ENCODE measurements at regions of chr6 and their contacts with region 1.

Region 1: DNA sequence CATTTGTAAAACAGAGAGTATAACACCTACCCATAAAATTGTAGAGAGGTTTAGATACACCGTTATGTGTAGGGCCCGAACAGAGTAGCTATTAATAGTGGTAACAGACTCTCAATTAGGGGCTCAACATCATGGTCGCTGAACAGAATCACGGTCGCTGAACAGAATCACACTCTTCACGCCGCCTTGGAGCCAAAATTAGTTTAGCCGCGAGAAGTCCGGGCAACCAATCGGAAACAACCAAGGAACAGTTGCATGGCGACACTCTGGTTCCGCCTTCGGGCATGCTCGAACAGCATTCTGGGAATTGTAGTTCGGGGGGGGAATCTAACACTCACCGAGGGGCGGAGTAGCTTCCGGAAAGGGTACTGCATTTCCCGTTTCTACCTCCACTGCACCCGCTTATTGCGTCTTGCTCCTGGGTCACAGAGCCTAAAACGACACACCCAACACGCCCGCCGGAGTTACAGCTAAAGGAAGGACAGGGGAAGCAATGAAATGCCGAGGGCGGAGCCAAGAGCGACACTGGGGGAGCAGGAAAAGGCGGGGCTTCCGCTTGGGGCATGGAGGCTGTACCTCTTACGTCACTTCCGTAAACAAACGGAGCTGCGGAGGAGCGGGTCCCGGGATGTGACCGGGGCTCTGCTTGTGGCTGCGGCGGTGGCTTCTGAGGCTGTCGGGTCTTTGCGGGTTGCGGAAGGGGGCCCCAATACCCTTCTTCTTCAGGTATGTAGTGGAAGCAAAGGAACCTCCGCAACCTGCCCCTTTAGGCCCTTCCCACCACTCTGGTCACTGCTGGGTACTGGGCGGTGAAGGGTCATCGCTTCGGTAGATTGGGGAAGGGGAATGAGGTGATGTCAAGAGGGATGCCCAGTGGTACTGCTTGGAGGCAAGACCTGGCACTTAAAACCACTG is at the start of gene CCDC28A:
- DNase-seq: peak; percentile 86 to 98 (median 97)
- ATAC-seq: peak; percentile 93
- H3K4me3 ChIP-seq: peak within 1 kb of the TSS; percentile 94
- H3K4me3 Mint-ChIP-seq: peak within 1 kb of the TSS; percentile 91 to 100 (median 99)
- H3K27ac ChIP-seq: peak within 1 kb of the TSS; percentile 87
- H3K27ac Mint-ChIP-seq: peak within 1 kb of the TSS; percentile 96 to 100 (median 100)
- H3K4me1 ChIP-seq: peaks cover 6 to 10% of the 10 kb centered on the region in 2 donors
- H3K4me1 Mint-ChIP-seq: peaks cover 4 to 39% (median 36%) of the 10 kb centered on the region in 7 donors
- H3K27me3 ChIP-seq: no peaks in the 10 kb centered on the region
- H3K27me3 Mint-ChIP-seq: no peaks in the 10 kb centered on the region
- total RNA-seq, gene CCDC28A: 19.9 to 34.2 (median 25.6) TPM

Region 2: GRCh38 chr6:136822376-136823127 is 1950.9 kb before region 1 on chr6 and contains the start of gene PEX7:
- CTCF ChIA-PET with region 1: no interaction called
- POLR2A ChIA-PET with region 1: no interaction called
- intact Hi-C with region 1: loop called in 1 of 2 experiments (anchors 2 kb)
- DNase-seq: peak; percentile 83 to 94 (median 92)
- ATAC-seq: peak; percentile 95
- H3K4me3 ChIP-seq: peak within 1 kb of the TSS; percentile 96
- H3K4me3 Mint-ChIP-seq: peak within 1 kb of the TSS; percentile 87 to 99 (median 94)
- H3K27ac ChIP-seq: peak within 1 kb of the TSS; percentile 91
- H3K27ac Mint-ChIP-seq: peak within 1 kb of the TSS; percentile 91 to 99 (median 96)
- H3K4me1 ChIP-seq: peaks cover 6 to 13% of the 10 kb centered on the region in 2 donors
- H3K4me1 Mint-ChIP-seq: peaks cover 13 to 50% (median 40%) of the 10 kb centered on the region in 7 donors
- H3K27me3 ChIP-seq: peaks cover 0 to 3% of the 10 kb centered on the region in 2 donors
- H3K27me3 Mint-ChIP-seq: peaks cover 3 to 10% (median 8%) of the 10 kb centered on the region in 5 donors
- total RNA-seq, gene PEX7: 4.0 to 6.2 (median 5.4) TPM

Region 3: DNA sequence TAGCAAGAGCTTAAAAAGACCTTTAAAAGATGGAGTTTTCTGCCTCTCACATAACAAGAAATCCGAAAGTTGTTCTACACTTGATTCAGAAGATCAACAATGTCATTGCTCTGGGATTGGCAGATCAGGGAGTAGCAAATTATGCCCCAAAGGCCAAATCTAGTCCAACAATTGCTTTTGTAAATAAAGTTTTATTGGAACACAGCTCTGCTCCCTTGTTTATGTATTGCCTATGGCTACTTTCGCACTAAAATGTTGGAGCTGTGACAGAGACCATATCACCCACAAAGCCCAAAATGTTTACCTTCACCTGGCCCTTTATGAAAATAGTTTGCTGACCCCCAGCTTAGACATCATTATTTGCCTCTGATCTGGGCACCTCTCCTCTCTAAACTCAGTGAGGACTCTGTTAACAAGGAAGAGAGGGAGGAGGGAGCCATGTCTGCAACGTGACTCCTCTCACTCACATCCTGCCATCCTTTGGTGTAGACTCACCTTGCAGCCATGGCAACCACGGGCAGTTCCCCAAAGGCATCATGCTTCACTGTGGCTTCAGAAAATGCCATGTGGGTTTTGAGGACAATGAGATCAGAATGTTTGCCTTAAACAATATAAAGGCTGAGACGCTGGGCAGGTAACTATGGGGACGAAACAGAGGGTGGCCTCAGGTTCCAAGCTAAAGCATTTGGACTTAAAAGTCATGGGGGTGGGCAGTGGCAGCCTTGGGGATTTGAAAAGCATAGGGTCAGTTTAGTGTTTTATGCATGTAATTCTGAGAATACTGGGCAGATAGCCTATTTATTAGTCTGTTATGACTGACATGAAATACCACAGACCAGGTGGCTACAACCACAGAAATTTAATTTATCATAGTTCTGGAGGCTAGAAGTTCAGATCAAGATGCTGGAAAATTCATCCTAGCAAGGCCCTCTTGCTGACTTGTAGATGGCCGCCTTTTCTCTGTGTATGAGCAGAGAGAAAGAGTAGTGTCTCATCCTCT is 1056.1 kb before region 1 on chr6:
- CTCF ChIA-PET with region 1: no interaction called
- POLR2A ChIA-PET with region 1: no interaction called
- intact Hi-C with region 1: loop called in 1 of 2 experiments (anchors 10 kb)
- DNase-seq: peak; percentile 44 to 85 (median 76)
- ATAC-seq: peak; percentile 74
- H3K4me3 ChIP-seq: no peak overlapping the region
- H3K4me3 Mint-ChIP-seq: peak overlapping the region in 8 of 10 donors; percentile 1 to 76 (median 23)
- H3K27ac ChIP-seq: peak overlapping the region; percentile 65
- H3K27ac Mint-ChIP-seq: peak overlapping the region; percentile 56 to 96 (median 93)
- H3K4me1 ChIP-seq: peaks cover 17 to 36% of the 10 kb centered on the region in 2 donors
- H3K4me1 Mint-ChIP-seq: peaks cover 23 to 65% (median 40%) of the 10 kb centered on the region in 7 donors
- H3K27me3 ChIP-seq: no peaks in the 10 kb centered on the region
- H3K27me3 Mint-ChIP-seq: no peaks in the 10 kb centered on the region

Region 4: GRCh38 chr6:138109042-138109997 is 664.1 kb before region 1 on chr6:
- CTCF ChIA-PET with region 1: no interaction called
- POLR2A ChIA-PET with region 1: no interaction called
- intact Hi-C with region 1: loop called (anchors 5 kb)
- DNase-seq: peak; percentile 47 to 77 (median 68)
- ATAC-seq: peak; percentile 84
- H3K4me3 ChIP-seq: no peak overlapping the region
- H3K4me3 Mint-ChIP-seq: peak overlapping the region in 4 of 10 donors; percentile 2 to 45 (median 7)
- H3K27ac ChIP-seq: no peak overlapping the region
- H3K27ac Mint-ChIP-seq: no peak overlapping the region
- H3K4me1 ChIP-seq: peaks cover 8 to 10% of the 10 kb centered on the region in 2 donors
- H3K4me1 Mint-ChIP-seq: peaks cover 14 to 27% (median 20%) of the 10 kb centered on the region in 7 donors
- H3K27me3 ChIP-seq: peaks cover 0 to 6% of the 10 kb centered on the region in 2 donors
- H3K27me3 Mint-ChIP-seq: peaks cover 34 to 56% (median 47%) of the 10 kb centered on the region in 5 donors

Region 5: DNA sequence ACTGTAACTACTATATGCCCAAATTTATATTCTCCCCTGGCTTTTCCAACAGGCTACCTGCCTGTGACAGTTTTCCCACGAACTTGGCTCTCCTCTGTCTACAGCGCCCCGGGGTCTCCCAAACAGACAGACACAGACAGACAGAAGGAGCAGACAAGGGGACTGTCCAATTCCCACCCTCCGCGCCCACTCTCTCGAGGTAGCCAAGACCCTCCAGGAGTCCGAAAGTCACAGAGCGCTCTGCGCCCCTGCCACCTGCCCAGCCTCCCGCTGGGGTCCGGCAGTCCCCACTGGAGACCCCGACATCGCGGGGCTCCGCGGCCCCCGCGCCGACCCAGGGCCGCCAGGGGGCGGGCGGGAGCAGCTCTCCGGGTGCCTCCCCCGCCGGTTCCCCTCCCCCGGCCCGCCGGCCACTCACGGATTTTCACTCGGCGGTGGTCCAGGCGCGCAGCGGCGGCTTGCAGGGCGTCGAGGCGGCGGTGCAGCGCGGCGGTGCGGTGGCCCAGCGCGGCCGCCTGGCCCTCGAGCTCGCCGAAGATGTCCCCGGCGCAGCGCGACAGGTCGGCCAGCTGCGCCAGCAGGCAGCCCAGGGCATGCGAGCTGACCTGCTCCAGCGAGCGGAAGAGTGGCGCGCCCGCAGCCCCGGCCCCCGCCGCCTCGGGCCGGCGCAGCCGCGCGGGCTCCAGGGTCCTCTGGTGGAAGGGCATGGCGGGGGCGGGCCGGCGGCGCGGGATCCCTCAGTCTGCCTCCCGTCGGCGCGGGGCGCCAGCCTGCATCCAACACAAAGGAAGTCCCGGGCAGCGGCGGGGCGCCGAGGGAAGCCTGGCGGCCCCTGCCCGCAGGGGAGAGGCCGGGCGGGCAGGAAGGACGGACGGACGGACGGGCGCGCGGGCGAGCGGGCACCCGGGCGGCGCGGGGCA is 81.1 kb before region 1 on chr6:
- CTCF ChIA-PET with region 1: interaction called, 3 read pairs
- POLR2A ChIA-PET with region 1: no interaction called
- intact Hi-C with region 1: loop called in 1 of 2 experiments (anchors 2 kb)
- DNase-seq: peak; percentile 20 to 74 (median 37)
- ATAC-seq: peak; percentile 80
- H3K4me3 ChIP-seq: peak overlapping the region; percentile 22
- H3K4me3 Mint-ChIP-seq: peak overlapping the region; percentile 53 to 88 (median 86)
- H3K27ac ChIP-seq: no peak overlapping the region
- H3K27ac Mint-ChIP-seq: peak overlapping the region in 2 of 9 donors; percentile 49 to 77
- H3K4me1 ChIP-seq: peaks cover 0 to 3% of the 10 kb centered on the region in 2 donors
- H3K4me1 Mint-ChIP-seq: peaks cover 0 to 13% (median 9%) of the 10 kb centered on the region in 7 donors
- H3K27me3 ChIP-seq: peaks cover 0 to 6% of the 10 kb centered on the region in 2 donors
- H3K27me3 Mint-ChIP-seq: peaks cover 23 to 56% (median 46%) of the 10 kb centered on the region in 5 donors

Region 6: DNA sequence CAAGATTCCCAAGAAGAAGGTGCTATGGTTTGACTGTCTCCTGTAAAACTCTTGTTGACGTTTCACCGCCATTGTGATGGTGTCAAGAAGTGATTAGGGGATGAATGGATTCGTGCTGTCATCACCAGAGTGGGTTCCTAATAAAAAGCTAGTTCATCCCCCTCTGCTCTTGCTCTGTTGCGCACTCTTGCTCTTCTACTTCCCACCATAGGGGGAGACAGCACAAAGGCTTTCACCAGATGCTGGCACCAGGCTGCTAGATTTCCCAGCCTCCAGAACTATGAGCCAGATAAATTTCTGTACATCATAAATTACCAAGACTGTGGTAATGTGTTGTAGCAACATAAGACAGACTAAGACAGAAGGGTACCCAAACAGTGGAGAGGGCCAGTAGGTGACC is 21.4 kb before region 1 on chr6:
- CTCF ChIA-PET with region 1: no interaction called
- POLR2A ChIA-PET with region 1: no interaction called
- intact Hi-C with region 1: no loop called
- DNase-seq: no peak
- ATAC-seq: no peak
- H3K4me3 ChIP-seq: no peak overlapping the region
- H3K4me3 Mint-ChIP-seq: no peak overlapping the region
- H3K27ac ChIP-seq: no peak overlapping the region
- H3K27ac Mint-ChIP-seq: no peak overlapping the region
- H3K4me1 ChIP-seq: no peaks in the 10 kb centered on the region
- H3K4me1 Mint-ChIP-seq: no peaks in the 10 kb centered on the region
- H3K27me3 ChIP-seq: no peaks in the 10 kb centered on the region
- H3K27me3 Mint-ChIP-seq: no peaks in the 10 kb centered on the region

Region 7: DNA sequence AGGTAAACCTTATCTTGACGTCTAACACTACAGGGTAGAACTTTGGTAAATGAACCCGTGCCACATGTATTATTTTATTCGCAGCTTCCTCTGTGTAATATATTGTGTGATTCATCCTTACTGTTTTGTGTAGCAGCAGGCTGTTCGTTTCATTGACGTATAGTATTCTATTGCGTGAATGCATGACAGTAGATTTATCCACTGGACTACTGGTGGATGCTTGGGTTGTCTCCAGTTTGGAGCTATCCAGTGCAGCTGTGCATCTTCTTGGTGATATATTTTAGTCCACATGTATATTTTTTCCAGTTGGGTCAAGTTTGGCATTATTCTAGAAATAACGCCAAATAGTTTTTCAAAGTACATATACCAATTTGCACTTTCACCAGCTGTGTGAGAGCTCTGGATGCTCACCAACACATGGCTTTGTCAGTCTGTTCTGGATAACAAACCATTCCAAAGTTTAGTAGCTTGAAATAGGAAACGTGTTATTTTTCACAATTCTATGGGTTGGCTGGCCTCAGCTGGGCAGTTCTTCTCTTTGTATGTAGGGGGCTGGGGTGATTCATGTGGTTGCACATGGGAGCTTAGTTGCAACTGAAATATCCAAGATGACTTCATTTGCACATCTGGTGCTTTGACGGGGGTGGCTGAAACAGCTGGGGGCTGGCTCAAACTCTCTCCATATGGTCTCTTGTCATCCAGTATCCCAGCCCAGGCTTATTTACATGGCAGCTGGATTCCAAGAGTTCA is 31.8 kb after region 1 on chr6:
- CTCF ChIA-PET with region 1: no interaction called
- POLR2A ChIA-PET with region 1: no interaction called
- intact Hi-C with region 1: no loop called
- DNase-seq: no peak
- ATAC-seq: no peak
- H3K4me3 ChIP-seq: no peak overlapping the region
- H3K4me3 Mint-ChIP-seq: no peak overlapping the region
- H3K27ac ChIP-seq: no peak overlapping the region
- H3K27ac Mint-ChIP-seq: no peak overlapping the region
- H3K4me1 ChIP-seq: no peaks in the 10 kb centered on the region
- H3K4me1 Mint-ChIP-seq: no peaks in the 10 kb centered on the region
- H3K27me3 ChIP-seq: no peaks in the 10 kb centered on the region
- H3K27me3 Mint-ChIP-seq: peaks cover 0 to 14% (median 3%) of the 10 kb centered on the region in 5 donors

Region 8: GRCh38 chr6:138863321-138863720 is 89.9 kb after region 1 on chr6:
- CTCF ChIA-PET with region 1: no interaction called
- POLR2A ChIA-PET with region 1: no interaction called
- intact Hi-C with region 1: no loop called
- DNase-seq: no peak
- ATAC-seq: no peak
- H3K4me3 ChIP-seq: no peak overlapping the region
- H3K4me3 Mint-ChIP-seq: no peak overlapping the region
- H3K27ac ChIP-seq: no peak overlapping the region
- H3K27ac Mint-ChIP-seq: no peak overlapping the region
- H3K4me1 ChIP-seq: no peaks in the 10 kb centered on the region
- H3K4me1 Mint-ChIP-seq: no peaks in the 10 kb centered on the region
- H3K27me3 ChIP-seq: no peaks in the 10 kb centered on the region
- H3K27me3 Mint-ChIP-seq: peaks cover 0 to 15% (median 11%) of the 10 kb centered on the region in 5 donors

Region 9: GRCh38 chr6:139323511-139324300 is 550.3 kb after region 1 on chr6:
- CTCF ChIA-PET with region 1: interaction called, 4 read pairs
- POLR2A ChIA-PET with region 1: no interaction called
- intact Hi-C with region 1: loop called in 1 of 2 experiments (anchors 1 kb)
- DNase-seq: peak; percentile 54 to 90 (median 86)
- ATAC-seq: peak; percentile 90
- H3K4me3 ChIP-seq: peak overlapping the region; percentile 64
- H3K4me3 Mint-ChIP-seq: peak overlapping the region; percentile 80 to 96 (median 90)
- H3K27ac ChIP-seq: peak overlapping the region; percentile 83
- H3K27ac Mint-ChIP-seq: peak overlapping the region; percentile 96 to 100 (median 99)
- H3K4me1 ChIP-seq: peaks cover 12 to 19% of the 10 kb centered on the region in 2 donors
- H3K4me1 Mint-ChIP-seq: peaks cover 19 to 44% (median 32%) of the 10 kb centered on the region in 7 donors
- H3K27me3 ChIP-seq: no peaks in the 10 kb centered on the region
- H3K27me3 Mint-ChIP-seq: no peaks in the 10 kb centered on the region

Measured in naive thymus-derived CD4-positive, alpha-beta T cell (primary cell).